K562 (cell line): ENCODE measurements at regions of chr7 and their contacts with region 1.

Region 1: DNA sequence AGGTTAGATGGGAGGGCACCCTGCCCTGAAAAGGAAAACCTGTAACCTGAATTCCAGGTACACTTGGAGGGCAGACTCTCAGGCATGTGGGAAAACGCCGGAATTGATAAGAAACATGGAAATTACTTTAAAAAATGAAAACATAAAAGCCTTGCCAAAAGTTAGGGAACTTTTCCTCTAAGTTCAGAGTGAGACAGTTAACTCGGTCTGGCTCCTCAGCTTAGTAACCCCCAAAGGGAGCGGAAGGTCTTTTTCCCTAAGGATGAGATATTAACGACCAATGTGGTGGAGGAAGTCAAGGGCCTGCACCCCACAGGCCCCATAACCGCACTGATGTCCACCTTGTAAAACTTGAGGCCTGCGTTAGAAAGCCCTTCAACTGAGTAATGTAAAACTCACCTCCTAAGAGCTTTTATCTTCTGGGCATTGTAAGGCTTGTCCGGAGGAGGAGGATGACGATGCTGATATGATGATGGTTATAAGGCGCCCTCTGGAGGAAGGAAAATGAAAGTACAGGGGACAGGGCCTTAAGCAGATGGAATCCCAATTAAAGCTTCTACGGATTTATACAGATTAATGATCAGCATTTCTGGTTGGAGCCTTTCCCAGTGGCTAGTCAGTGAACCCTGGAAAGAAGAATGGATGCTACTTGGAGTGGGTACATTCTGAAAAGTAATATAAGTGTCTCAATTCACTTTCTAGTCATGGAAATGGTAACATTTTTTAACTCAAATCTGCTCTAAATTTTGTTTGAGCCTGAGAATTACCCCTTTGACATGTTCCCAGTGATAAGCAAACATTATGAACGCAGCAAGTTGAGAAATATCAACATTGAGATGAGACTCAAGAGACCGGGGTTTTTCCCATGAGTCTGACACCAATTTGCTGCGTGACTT is 694 bp downstream of the COL1A2 start:
- DNase-seq: peak; percentile 83 to 86 (median 84)
- ATAC-seq: peak; percentile 96
- H3K4me3 ChIP-seq: no peak overlapping the region
- H3K27ac ChIP-seq: peak overlapping the region; percentile 31; the same call in 2 of the 3 replicates
- H3K4me1 ChIP-seq: peaks cover 5 to 7% of the 10 kb centered on the region in 2 experiments; a peak in 4 of 5 replicates
- H3K27me3 ChIP-seq: peaks cover 0 to 10% of the 10 kb centered on the region in 2 experiments; a peak in 1 of 5 replicates
- CTCF ChIP-seq: peak; percentile 71 to 90 (median 83)
- EP300 ChIP-seq: no peak
- POLR2A ChIP-seq: no peak
- RAD21 ChIP-seq: peak; percentile 75 to 90

Region 2: GRCh38 chr7:93245525-93246432 is 1149.6 kb before region 1 on chr7:
- CTCF ChIA-PET with region 1: interaction called, 3 read pairs
- POLR2A ChIA-PET with region 1: no interaction called
- in situ Hi-C with region 1: no loop called
- intact Hi-C with region 1: loop called (anchors 5 kb)
- DNase-seq: peak in 3 of 4 experiments; percentile 17 to 38 (median 22)
- ATAC-seq: no peak
- H3K4me3 ChIP-seq: no peak overlapping the region
- H3K27ac ChIP-seq: no peak overlapping the region
- H3K4me1 ChIP-seq: no peaks in the 10 kb centered on the region; a peak in 1 of 5 replicates
- H3K27me3 ChIP-seq: no peaks in the 10 kb centered on the region
- CTCF ChIP-seq: peak in 2 of 3 experiments; percentile 43 to 81; a peak in 4 of 6 replicates
- EP300 ChIP-seq: no peak
- POLR2A ChIP-seq: no peak
- RAD21 ChIP-seq: peak; percentile 77 to 89

Region 3: GRCh38 chr7:93704217-93704616 is 691.2 kb before region 1 on chr7:
- CTCF ChIA-PET with region 1: no interaction called
- POLR2A ChIA-PET with region 1: no interaction called
- in situ Hi-C with region 1: loop called (anchors 10 kb)
- intact Hi-C with region 1: no loop called
- DNase-seq: no peak
- ATAC-seq: no peak
- H3K4me3 ChIP-seq: no peak overlapping the region
- H3K27ac ChIP-seq: no peak overlapping the region
- H3K4me1 ChIP-seq: no peaks in the 10 kb centered on the region
- H3K27me3 ChIP-seq: no peaks in the 10 kb centered on the region
- CTCF ChIP-seq: no peak
- EP300 ChIP-seq: no peak
- POLR2A ChIP-seq: no peak
- RAD21 ChIP-seq: no peak

Region 4: GRCh38 chr7:93902777-93903423 is 492.5 kb before region 1 on chr7:
- CTCF ChIA-PET with region 1: no interaction called
- POLR2A ChIA-PET with region 1: no interaction called
- in situ Hi-C with region 1: no loop called
- intact Hi-C with region 1: loop called (anchors 2 kb)
- DNase-seq: peak; percentile 51 to 60 (median 56)
- ATAC-seq: peak; percentile 83
- H3K4me3 ChIP-seq: no peak overlapping the region
- H3K27ac ChIP-seq: no peak overlapping the region
- H3K4me1 ChIP-seq: no peaks in the 10 kb centered on the region
- H3K27me3 ChIP-seq: no peaks in the 10 kb centered on the region
- CTCF ChIP-seq: peak; percentile 65 to 87 (median 79)
- EP300 ChIP-seq: no peak
- POLR2A ChIP-seq: no peak
- RAD21 ChIP-seq: peak; percentile 64 to 80

Region 5: DNA sequence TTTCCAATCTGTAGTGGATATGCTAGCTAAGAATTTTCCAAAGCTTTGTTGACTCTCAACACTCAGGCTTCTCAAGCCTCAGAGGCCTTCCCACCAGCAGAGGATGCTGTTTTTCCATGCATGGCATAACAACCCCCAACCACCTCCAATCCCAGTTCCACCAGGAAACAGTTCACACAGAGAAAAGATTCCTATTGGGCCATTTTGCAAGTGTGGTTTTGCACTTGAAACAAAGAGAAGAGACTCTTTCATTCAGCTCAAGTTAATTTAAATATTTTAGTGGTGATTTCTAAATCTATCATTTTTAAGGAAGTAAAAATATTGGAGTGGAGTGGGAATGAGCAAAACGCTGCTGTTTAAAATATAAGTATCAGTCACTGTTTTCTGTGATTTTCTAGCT is 106.3 kb before region 1 on chr7:
- CTCF ChIA-PET with region 1: interaction called, 3 read pairs
- POLR2A ChIA-PET with region 1: no interaction called
- in situ Hi-C with region 1: no loop called
- intact Hi-C with region 1: loop called (anchors 1 kb)
- DNase-seq: peak in 2 of 4 experiments; percentile 47 to 60
- ATAC-seq: peak; percentile 84
- H3K4me3 ChIP-seq: no peak overlapping the region
- H3K27ac ChIP-seq: no peak overlapping the region
- H3K4me1 ChIP-seq: no peaks in the 10 kb centered on the region
- H3K27me3 ChIP-seq: no peaks in the 10 kb centered on the region
- CTCF ChIP-seq: peak; percentile 70 to 78 (median 75)
- EP300 ChIP-seq: no peak
- POLR2A ChIP-seq: no peak
- RAD21 ChIP-seq: peak; percentile 70 to 88

Region 6: DNA sequence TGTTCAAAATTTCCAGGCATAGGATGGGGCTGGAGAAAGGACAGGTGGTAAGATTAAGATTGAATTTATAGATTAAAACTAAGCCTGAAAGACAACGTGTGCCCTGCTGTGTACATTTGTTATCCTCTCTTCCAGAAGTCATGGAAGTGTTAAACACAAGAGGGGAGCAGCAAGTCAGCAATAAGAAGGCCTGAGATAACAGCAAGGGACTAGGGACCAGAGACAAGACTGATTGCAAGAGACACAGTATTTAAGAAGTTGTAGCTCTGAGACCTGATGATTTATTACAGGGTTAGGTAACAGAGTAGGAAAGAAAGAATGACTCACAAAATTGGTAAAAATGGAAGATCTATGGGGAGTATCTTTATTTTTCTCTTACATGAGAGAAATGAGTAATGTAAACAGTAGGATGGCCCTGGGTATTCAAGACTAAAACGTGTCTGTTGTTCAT is 56.4 kb before region 1 on chr7:
- CTCF ChIA-PET with region 1: no interaction called
- POLR2A ChIA-PET with region 1: no interaction called
- in situ Hi-C with region 1: no loop called
- intact Hi-C with region 1: loop called (anchors 5 kb)
- DNase-seq: peak; percentile 34 to 70 (median 52)
- ATAC-seq: peak; percentile 85
- H3K4me3 ChIP-seq: no peak overlapping the region
- H3K27ac ChIP-seq: no peak overlapping the region
- H3K4me1 ChIP-seq: peaks cover 0 to 3% of the 10 kb centered on the region in 2 experiments; a peak in 2 of 5 replicates
- H3K27me3 ChIP-seq: no peaks in the 10 kb centered on the region
- CTCF ChIP-seq: no peak
- EP300 ChIP-seq: no peak
- POLR2A ChIP-seq: no peak
- RAD21 ChIP-seq: peak in 1 of 2 experiments; percentile 34; a peak in 1 of 4 replicates